T-cell (primary cell): ENCODE measurements at regions of chr14 and their contacts with region 1.

Region 1: DNA sequence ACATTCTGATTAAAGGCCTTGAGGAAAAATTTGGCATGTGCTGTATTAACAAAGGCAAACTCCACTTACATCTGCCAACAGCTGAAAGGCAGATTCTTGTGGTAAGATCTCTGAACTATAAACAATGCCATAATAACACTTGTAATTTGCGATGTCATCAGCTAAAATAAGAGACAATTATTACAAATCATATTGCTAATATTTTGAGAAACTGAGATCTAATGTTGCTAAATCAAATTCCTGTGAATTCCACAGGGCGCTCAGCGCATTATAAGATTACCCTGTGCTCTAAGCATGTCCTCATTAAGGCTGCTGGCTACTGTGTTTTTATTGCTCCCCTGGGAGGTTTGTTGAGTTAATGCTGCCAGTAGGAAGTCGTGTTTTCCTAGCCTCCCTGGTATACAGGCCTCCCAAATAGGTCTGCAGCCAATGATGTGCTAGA is 244.8 kb downstream of the DACT1 start:
- DNase-seq: no peak
- ATAC-seq: no peak
- H3K4me3 ChIP-seq: no peak overlapping the region
- H3K4me3 Mint-ChIP-seq: no peak overlapping the region
- H3K27ac ChIP-seq: no peak overlapping the region
- H3K27ac Mint-ChIP-seq: no peak overlapping the region
- H3K4me1 ChIP-seq: no peaks in the 10 kb centered on the region
- H3K4me1 Mint-ChIP-seq: no peaks in the 10 kb centered on the region
- H3K27me3 ChIP-seq: no peaks in the 10 kb centered on the region
- H3K27me3 Mint-ChIP-seq: peaks cover 0 to 11% of the 10 kb centered on the region in 2 donors

Region 2: DNA sequence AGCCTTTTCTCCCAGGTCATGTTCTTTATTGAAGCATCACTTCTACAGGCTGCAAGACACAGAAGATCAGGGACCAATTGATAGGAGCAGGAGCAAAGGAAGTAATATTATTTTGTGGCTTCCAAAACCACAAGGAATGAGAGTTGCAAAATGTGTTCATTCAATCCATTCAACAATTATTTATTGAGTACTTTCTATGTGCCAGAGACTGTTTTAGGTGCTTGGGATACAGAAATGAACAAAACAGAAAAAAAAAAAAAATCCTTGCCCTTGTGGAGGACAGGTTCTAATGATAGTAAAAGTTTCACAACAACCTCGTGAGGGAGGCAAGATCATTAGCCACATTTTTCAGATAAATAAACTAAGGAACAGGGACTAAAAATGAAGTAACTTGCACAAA is 265.0 kb before region 1 on chr14:
- CTCF ChIA-PET with region 1: no interaction called
- POLR2A ChIA-PET with region 1: no interaction called
- DNase-seq: no peak
- ATAC-seq: no peak
- H3K4me3 ChIP-seq: no peak overlapping the region
- H3K4me3 Mint-ChIP-seq: no peak overlapping the region
- H3K27ac ChIP-seq: no peak overlapping the region
- H3K27ac Mint-ChIP-seq: no peak overlapping the region
- H3K4me1 ChIP-seq: peaks cover 0 to 7% of the 10 kb centered on the region in 2 experiments
- H3K4me1 Mint-ChIP-seq: peaks cover 2 to 6% (median 5%) of the 10 kb centered on the region in 3 donors
- H3K27me3 ChIP-seq: no peaks in the 10 kb centered on the region
- H3K27me3 Mint-ChIP-seq: no peaks in the 10 kb centered on the region

Region 3: GRCh38 chr14:58978343-58978742 is 95.7 kb after region 1 on chr14:
- CTCF ChIA-PET with region 1: no interaction called
- POLR2A ChIA-PET with region 1: interaction called in 1 of 2 experiments, 10 read pairs
- DNase-seq: no peak
- ATAC-seq: no peak
- H3K4me3 ChIP-seq: no peak overlapping the region
- H3K4me3 Mint-ChIP-seq: no peak overlapping the region
- H3K27ac ChIP-seq: no peak overlapping the region
- H3K27ac Mint-ChIP-seq: no peak overlapping the region
- H3K4me1 ChIP-seq: no peaks in the 10 kb centered on the region
- H3K4me1 Mint-ChIP-seq: no peaks in the 10 kb centered on the region
- H3K27me3 ChIP-seq: no peaks in the 10 kb centered on the region
- H3K27me3 Mint-ChIP-seq: peaks cover 2 to 6% of the 10 kb centered on the region in 2 donors